ENCODE measurements at regions of chr11 and their contacts with region 1.

Region 1: DNA sequence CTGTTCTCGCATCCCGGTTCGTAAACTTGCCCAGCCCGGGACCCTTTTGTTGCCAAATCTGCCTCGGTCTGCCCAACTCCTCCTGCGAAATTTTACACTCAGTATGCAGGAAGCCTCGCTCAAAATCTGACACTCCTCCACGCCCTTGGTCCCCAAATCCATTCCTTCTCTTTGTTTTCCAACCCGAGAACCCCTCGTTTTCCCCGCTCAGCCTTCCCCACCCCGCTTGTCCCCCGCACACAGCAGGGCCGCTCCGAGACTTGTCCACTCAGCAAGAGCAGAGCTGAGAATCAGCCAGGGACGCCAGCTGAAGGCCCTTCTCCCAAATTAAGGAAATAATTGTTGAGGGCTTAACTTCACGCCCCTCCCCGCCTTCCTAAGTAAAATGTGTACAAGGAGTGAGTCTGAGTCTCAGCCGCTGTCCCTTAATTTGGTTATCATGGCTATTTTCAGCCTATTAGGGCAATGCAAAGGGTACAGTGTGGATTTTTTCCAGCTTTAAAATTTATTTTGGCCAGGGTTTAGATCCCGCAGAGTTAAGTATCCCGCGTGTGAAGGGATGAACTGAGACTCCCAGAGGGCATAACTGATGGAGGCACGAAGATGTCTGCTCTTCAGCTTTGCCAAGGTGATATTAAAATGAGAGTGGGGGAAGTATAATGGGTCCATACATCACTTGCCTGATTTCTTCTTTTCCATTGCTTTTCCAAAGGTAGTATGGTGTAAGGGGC is 581 bp upstream of the FBXO3 start:
- DNase-seq: no peak
- H3K4me3 ChIP-seq: peak overlapping the region; percentile 94 to 96
- H3K27ac ChIP-seq: peak overlapping the region; percentile 79 to 83
- H3K4me1 ChIP-seq: no peaks in the 10 kb centered on the region
- H3K27me3 ChIP-seq: no peaks in the 10 kb centered on the region
- CTCF ChIP-seq: no peak
- POLR2A ChIP-seq: no peak

Region 2: DNA sequence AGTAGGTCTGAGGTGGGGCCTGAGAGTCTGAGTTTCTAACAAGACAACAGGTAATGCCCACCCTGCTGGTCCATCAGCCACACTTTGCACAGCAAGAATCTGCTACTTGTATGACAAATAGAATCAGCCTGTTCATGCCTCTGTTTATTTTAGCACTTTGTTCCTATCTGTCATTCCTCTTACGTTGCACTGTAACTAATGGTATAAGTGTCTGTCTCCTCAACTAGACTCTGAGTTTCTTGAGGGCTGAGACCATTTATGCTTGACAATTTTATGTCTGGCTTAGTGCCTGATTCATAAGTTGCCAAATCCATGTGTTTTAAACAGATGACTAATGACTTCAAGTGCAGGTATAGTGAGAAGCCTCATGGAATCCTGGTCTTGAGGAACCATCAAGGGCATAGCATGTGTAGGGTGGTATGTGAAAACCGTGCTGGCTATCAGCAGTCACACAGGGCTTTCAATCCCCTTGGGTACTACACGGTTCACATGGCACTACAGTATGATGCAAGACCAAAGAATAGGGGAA is 284.0 kb before region 1 on chr11:
- intact Hi-C with region 1: no loop called
- DNase-seq: no peak
- H3K4me3 ChIP-seq: no peak overlapping the region
- H3K27ac ChIP-seq: no peak overlapping the region
- H3K4me1 ChIP-seq: no peaks in the 10 kb centered on the region
- H3K27me3 ChIP-seq: no peaks in the 10 kb centered on the region
- CTCF ChIP-seq: no peak
- POLR2A ChIP-seq: no peak

Region 3: DNA sequence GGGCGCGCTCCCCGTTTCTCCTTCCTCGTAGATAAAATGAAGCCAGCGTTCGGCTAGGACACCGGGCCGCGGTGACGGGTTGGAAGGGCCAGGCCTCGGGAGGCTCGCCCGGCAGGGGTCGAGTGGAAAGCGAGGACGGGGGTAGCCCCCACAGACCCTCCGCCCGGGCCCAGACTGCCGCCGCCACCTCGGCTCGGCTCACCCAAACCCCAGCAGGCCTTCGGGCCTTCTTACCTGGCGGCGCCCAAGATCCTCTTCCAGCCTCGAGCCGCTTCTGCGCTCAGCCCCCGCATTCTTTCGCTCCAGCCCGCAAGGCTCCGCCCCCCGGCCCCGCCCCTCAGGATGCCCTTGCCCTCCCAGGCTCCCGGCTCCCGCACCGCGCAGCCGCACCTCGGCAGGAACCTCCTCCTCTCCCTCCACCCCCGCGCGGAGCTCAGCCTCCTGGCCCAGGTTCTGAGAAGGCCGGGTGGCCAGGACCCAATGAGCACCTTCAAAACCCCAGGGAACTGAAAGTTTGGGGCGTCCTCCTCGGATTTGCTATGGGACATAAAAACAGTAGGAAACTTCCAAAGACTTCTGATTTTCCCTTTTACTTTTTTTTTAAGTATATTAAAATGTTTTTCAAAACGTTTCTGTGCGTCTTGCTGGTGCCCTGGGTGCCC is 38.6 kb before region 1 on chr11 and contains the start of gene CD59:
- intact Hi-C with region 1: loop called (anchors 5 kb)
- DNase-seq: peak; percentile 96
- H3K4me3 ChIP-seq: peak within 1 kb of the TSS; percentile 68 to 81
- H3K27ac ChIP-seq: peak within 1 kb of the TSS; percentile 88 to 91
- H3K4me1 ChIP-seq: no peaks in the 10 kb centered on the region
- H3K27me3 ChIP-seq: no peaks in the 10 kb centered on the region
- CTCF ChIP-seq: peak in 1 of 4 experiments; percentile 9
- POLR2A ChIP-seq: peak; percentile 97
- total RNA-seq, gene CD59: 205 to 274 TPM

Region 4: GRCh38 chr11:33829433-33830141 is 54.7 kb after region 1 on chr11:
- intact Hi-C with region 1: no loop called
- DNase-seq: peak; percentile 50
- H3K4me3 ChIP-seq: peak overlapping the region; percentile 7 to 32
- H3K27ac ChIP-seq: no peak overlapping the region
- H3K4me1 ChIP-seq: peaks cover 6% of the 10 kb centered on the region
- H3K27me3 ChIP-seq: peaks cover 5% of the 10 kb centered on the region
- CTCF ChIP-seq: peak in 3 of 4 experiments; percentile 50 to 76 (median 53)
- POLR2A ChIP-seq: no peak

Measured in prostate gland (tissue), 2 donors.